Right cardiac atrium (tissue), 5 donors: ENCODE measurements at regions of chr3 and their contacts with region 1.

Region 1: GRCh38 chr3:87082796-87083440 is 92.0 kb upstream of the VGLL3 start:
- DNase-seq: no peak
- ATAC-seq: peak; percentile 62 to 72
- H3K4me3 ChIP-seq: no peak overlapping the region
- H3K27ac ChIP-seq: no peak overlapping the region
- H3K4me1 ChIP-seq: no peaks in the 10 kb centered on the region
- H3K27me3 ChIP-seq: no peaks in the 10 kb centered on the region

Region 2: GRCh38 chr3:86774082-86774691 is 308.7 kb before region 1 on chr3:
- intact Hi-C with region 1: loop called in 2 of 4 experiments (anchors 5 kb)
- DNase-seq: no peak
- ATAC-seq: no peak
- H3K4me3 ChIP-seq: no peak overlapping the region
- H3K27ac ChIP-seq: no peak overlapping the region
- H3K4me1 ChIP-seq: no peaks in the 10 kb centered on the region
- H3K27me3 ChIP-seq: no peaks in the 10 kb centered on the region

Region 3: GRCh38 chr3:86785386-86785785 is 297.5 kb before region 1 on chr3:
- intact Hi-C with region 1: loop called in 1 of 4 experiments (anchors 10 kb)
- DNase-seq: no peak
- ATAC-seq: peak in 1 of 2 donors; percentile 52
- H3K4me3 ChIP-seq: no peak overlapping the region
- H3K27ac ChIP-seq: no peak overlapping the region
- H3K4me1 ChIP-seq: no peaks in the 10 kb centered on the region
- H3K27me3 ChIP-seq: no peaks in the 10 kb centered on the region

Region 4: GRCh38 chr3:87595798-87596197 is 512.9 kb after region 1 on chr3:
- intact Hi-C with region 1: no loop called
- DNase-seq: no peak
- ATAC-seq: no peak
- H3K4me3 ChIP-seq: no peak overlapping the region
- H3K27ac ChIP-seq: no peak overlapping the region
- H3K4me1 ChIP-seq: no peaks in the 10 kb centered on the region
- H3K27me3 ChIP-seq: no peaks in the 10 kb centered on the region